ENCODE measurements at regions of chr1 and their contacts with region 1.

Region 1: GRCh38 chr1:180515864-180516388 is 13.5 kb upstream of the ACBD6 start:
- DNase-seq: peak; percentile 25 to 64 (median 46)
- H3K4me3 ChIP-seq: no peak overlapping the region
- H3K4me3 Mint-ChIP-seq: no peak overlapping the region
- H3K27ac ChIP-seq: no peak overlapping the region
- H3K27ac Mint-ChIP-seq: peak overlapping the region in 1 of 8 donors; percentile 56
- H3K4me1 ChIP-seq: peaks cover 6% of the 10 kb centered on the region
- H3K4me1 Mint-ChIP-seq: peaks cover 0 to 6% (median 5%) of the 10 kb centered on the region in 3 donors
- H3K27me3 ChIP-seq: no peaks in the 10 kb centered on the region
- H3K27me3 Mint-ChIP-seq: peaks cover 0 to 24% of the 10 kb centered on the region in 2 donors

Region 2: DNA sequence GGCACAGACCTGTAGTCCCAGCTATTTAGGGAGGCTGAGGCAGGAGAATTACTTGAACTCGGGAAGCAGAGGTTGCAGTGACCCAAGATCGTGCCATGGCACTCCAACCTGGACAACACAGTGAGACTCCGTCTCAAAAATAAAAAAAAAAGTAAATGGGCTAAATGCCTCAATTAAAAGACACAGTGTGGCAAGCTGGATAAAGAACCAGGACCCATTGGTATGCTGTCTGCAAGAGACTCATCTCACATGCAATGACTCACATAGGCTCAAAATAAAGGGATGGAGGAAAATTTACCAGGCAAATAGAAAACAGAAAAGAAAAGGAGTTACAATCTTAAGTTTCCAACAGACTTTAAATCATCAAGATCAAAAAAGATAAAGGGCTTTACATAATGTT is 53.8 kb before region 1 on chr1:
- CTCF ChIA-PET with region 1: no interaction called
- POLR2A ChIA-PET with region 1: no interaction called
- DNase-seq: no peak
- H3K4me3 ChIP-seq: no peak overlapping the region
- H3K4me3 Mint-ChIP-seq: no peak overlapping the region
- H3K27ac ChIP-seq: no peak overlapping the region
- H3K27ac Mint-ChIP-seq: no peak overlapping the region
- H3K4me1 ChIP-seq: no peaks in the 10 kb centered on the region
- H3K4me1 Mint-ChIP-seq: peaks cover 28 to 40% (median 28%) of the 10 kb centered on the region in 3 donors
- H3K27me3 ChIP-seq: no peaks in the 10 kb centered on the region
- H3K27me3 Mint-ChIP-seq: no peaks in the 10 kb centered on the region

Region 3: GRCh38 chr1:180502360-180503273 is 13.3 kb before region 1 on chr1 and contains the start of gene ACBD6:
- CTCF ChIA-PET with region 1: interaction called, 16 read pairs
- POLR2A ChIA-PET with region 1: no interaction called
- DNase-seq: peak; percentile 65 to 88 (median 83)
- H3K4me3 ChIP-seq: peak within 1 kb of the TSS; percentile 90
- H3K4me3 Mint-ChIP-seq: peak within 1 kb of the TSS; percentile 94 to 98 (median 96)
- H3K27ac ChIP-seq: peak within 1 kb of the TSS; percentile 62
- H3K27ac Mint-ChIP-seq: peak within 1 kb of the TSS; percentile 95 to 99 (median 97)
- H3K4me1 ChIP-seq: peaks cover 24% of the 10 kb centered on the region
- H3K4me1 Mint-ChIP-seq: peaks cover 31 to 54% (median 48%) of the 10 kb centered on the region in 3 donors
- H3K27me3 ChIP-seq: no peaks in the 10 kb centered on the region
- H3K27me3 Mint-ChIP-seq: no peaks in the 10 kb centered on the region
- total RNA-seq, gene ACBD6: 50.3 to 51.4 TPM

Region 4: DNA sequence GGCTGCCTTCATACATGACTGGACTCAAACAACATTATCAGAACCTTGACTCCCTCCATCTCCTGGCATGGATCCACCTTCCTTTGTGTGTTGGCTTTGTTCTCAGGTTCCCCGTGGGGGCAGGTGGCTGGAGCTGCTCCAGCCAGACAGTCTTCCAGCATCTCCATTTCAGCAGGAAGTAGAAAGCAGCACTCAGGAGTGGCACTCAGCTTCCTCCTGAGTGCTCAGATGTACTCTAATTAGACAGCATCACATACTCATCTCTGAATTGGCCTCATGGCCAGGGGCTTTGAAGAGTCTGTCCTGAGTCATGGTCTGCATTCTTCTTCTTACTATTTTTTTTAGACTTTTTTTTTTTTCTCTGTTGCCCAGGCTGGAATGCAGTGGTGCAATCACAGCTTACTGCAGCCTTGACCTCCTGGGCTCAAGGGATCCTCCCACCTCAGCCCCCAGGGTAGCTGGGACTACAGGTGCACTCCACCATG is 70.8 kb after region 1 on chr1:
- CTCF ChIA-PET with region 1: no interaction called
- POLR2A ChIA-PET with region 1: no interaction called
- DNase-seq: no peak
- H3K4me3 ChIP-seq: no peak overlapping the region
- H3K4me3 Mint-ChIP-seq: no peak overlapping the region
- H3K27ac ChIP-seq: peak overlapping the region; percentile 68
- H3K27ac Mint-ChIP-seq: no peak overlapping the region
- H3K4me1 ChIP-seq: no peaks in the 10 kb centered on the region
- H3K4me1 Mint-ChIP-seq: peaks cover 0 to 9% (median 0%) of the 10 kb centered on the region in 3 donors
- H3K27me3 ChIP-seq: no peaks in the 10 kb centered on the region
- H3K27me3 Mint-ChIP-seq: peaks cover 3 to 16% of the 10 kb centered on the region in 2 donors

Region 5: DNA sequence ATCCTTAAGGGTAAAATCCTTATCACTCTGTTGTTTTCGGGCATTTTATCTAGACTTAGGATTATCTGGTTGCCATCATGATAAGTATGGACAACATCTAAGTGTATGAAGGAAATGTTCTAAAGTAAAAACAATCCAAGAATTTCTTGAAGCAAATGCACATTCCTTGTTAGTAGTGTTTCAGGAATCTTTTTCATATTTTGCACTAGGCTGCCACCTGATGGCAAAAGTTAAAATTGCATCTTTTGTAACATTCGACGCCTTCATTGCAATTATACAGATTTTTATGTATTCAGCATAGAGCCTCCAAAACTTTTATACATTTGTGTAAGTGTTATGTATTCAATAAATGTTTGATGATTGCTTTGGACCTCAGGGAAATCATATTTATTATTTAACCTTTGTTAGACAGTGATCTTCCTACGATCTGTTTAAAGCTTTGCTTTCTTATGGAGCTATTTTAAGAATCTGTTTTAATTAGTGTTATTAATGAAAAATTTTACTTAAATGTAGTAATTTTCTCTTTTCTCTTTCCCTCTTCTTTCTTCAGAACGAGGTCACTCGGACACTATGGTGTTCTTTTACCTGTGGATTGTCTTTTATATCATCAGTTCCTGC is 347.3 kb after region 1 on chr1:
- CTCF ChIA-PET with region 1: interaction called, 78 read pairs
- POLR2A ChIA-PET with region 1: interaction called, 3 read pairs
- DNase-seq: peak in 3 of 5 donors; percentile 3 to 19 (median 16)
- H3K4me3 ChIP-seq: no peak overlapping the region
- H3K4me3 Mint-ChIP-seq: no peak overlapping the region
- H3K27ac ChIP-seq: no peak overlapping the region
- H3K27ac Mint-ChIP-seq: no peak overlapping the region
- H3K4me1 ChIP-seq: no peaks in the 10 kb centered on the region
- H3K4me1 Mint-ChIP-seq: no peaks in the 10 kb centered on the region
- H3K27me3 ChIP-seq: no peaks in the 10 kb centered on the region
- H3K27me3 Mint-ChIP-seq: no peaks in the 10 kb centered on the region

Region 6: DNA sequence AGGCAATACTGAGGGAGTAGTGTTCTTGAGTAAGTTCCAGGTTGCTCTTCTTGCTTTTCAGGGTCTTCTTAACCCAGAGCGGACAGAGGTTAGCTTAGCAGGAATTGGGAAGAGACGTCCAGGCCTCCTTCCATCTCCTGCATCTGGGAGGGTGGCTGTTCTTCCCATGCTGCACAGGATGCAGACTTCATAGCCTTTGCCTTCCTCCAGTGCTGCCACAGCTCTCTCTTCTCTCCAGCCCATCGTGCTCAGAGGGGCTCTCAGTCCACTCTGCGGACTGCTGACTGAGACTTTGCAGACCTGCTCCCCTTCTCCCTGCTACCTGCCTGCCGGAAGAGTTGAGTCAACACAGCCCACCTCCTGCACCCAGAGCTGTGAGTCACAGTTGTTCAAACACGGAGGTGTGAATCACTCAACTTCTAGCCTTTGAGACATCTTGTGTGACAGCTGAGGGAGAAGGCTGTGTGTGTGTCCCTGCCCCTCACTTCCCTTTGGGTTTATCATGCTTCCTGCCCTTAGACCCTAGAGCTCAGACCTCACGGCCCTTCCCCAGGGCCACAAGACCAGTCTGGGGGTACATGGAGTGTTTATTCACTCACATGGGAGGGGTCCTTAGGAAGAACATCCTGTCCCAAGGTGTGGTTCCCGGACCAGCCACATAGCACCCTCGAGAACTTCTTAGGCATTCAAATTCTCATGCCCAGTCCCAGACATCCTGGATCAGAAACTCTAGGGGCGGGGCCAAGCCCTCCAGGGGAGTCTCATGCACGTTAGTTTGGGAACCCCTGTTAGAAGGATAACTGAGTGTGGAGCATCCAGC is 809.1 kb after region 1 on chr1:
- CTCF ChIA-PET with region 1: no interaction called
- POLR2A ChIA-PET with region 1: interaction called, 13 read pairs
- DNase-seq: peak in 1 of 5 donors; percentile 52
- H3K4me3 ChIP-seq: no peak overlapping the region
- H3K4me3 Mint-ChIP-seq: peak overlapping the region in 3 of 7 donors; percentile 12 to 83 (median 27)
- H3K27ac ChIP-seq: no peak overlapping the region
- H3K27ac Mint-ChIP-seq: peak overlapping the region in 1 of 8 donors; percentile 14
- H3K4me1 ChIP-seq: peaks cover 4% of the 10 kb centered on the region
- H3K4me1 Mint-ChIP-seq: peaks cover 0 to 11% (median 7%) of the 10 kb centered on the region in 3 donors
- H3K27me3 ChIP-seq: no peaks in the 10 kb centered on the region
- H3K27me3 Mint-ChIP-seq: peaks cover 8 to 9% of the 10 kb centered on the region in 2 donors

Measured in CD8-positive, alpha-beta memory T cell (primary cell).